ENCODE measurements at regions of chr6 and their contacts with region 1.

Region 1: GRCh38 chr6:21987501-21987957 is 309.3 kb downstream of the PRL start:
- DNase-seq: peak; percentile 78 to 90 (median 83)
- H3K4me3 ChIP-seq: peak overlapping the region; percentile 49 to 87 (median 81)
- H3K4me3 Mint-ChIP-seq: peak overlapping the region; percentile 71 to 74
- H3K27ac ChIP-seq: peak overlapping the region; percentile 83 to 85
- H3K27ac Mint-ChIP-seq: peak overlapping the region; percentile 83 to 95 (median 94)
- H3K4me1 ChIP-seq: peaks cover 23 to 24% of the 10 kb centered on the region in 2 donors
- H3K4me1 Mint-ChIP-seq: peaks cover 24% of the 10 kb centered on the region
- H3K27me3 ChIP-seq: no peaks in the 10 kb centered on the region
- H3K27me3 Mint-ChIP-seq: peaks cover 0 to 2% (median 0%) of the 10 kb centered on the region in 3 donors
- CTCF ChIP-seq: no peak

Region 2: DNA sequence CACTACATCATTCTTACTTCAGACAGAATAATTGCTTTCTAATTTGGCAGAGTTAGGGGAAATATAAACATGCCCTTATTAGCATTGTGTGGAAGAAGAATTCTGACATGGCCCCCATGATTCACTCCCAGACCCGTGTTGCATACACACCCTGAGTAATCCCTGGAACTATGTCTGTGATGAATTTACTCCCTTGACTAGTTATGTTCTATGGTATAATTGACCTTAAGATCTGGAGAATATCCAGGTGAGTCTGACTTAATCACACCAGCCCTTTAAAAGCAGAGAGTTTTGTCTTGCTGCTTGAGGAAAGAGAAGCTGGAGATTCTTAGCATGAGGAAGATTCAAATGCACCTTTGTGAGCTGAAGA is 131.1 kb before region 1 on chr6:
- intact Hi-C with region 1: loop called in 1 of 2 experiments (anchors 5 kb)
- DNase-seq: peak; percentile 75 to 88 (median 86)
- H3K4me3 ChIP-seq: peak overlapping the region; percentile 31 to 88 (median 72)
- H3K4me3 Mint-ChIP-seq: peak overlapping the region; percentile 68 to 89
- H3K27ac ChIP-seq: peak overlapping the region; percentile 98 to 100
- H3K27ac Mint-ChIP-seq: peak overlapping the region; percentile 99 to 100 (median 99)
- H3K4me1 ChIP-seq: peaks cover 34 to 45% of the 10 kb centered on the region in 2 donors
- H3K4me1 Mint-ChIP-seq: peaks cover 41% of the 10 kb centered on the region
- H3K27me3 ChIP-seq: no peaks in the 10 kb centered on the region
- H3K27me3 Mint-ChIP-seq: peaks cover 0 to 2% (median 0%) of the 10 kb centered on the region in 3 donors
- CTCF ChIP-seq: no peak

Region 3: GRCh38 chr6:22155551-22155950 is 168.0 kb after region 1 on chr6:
- intact Hi-C with region 1: no loop called
- DNase-seq: no peak
- H3K4me3 ChIP-seq: no peak overlapping the region
- H3K4me3 Mint-ChIP-seq: no peak overlapping the region
- H3K27ac ChIP-seq: no peak overlapping the region
- H3K27ac Mint-ChIP-seq: no peak overlapping the region
- H3K4me1 ChIP-seq: peaks cover 11 to 12% of the 10 kb centered on the region in 2 donors
- H3K4me1 Mint-ChIP-seq: peaks cover 12% of the 10 kb centered on the region
- H3K27me3 ChIP-seq: no peaks in the 10 kb centered on the region
- H3K27me3 Mint-ChIP-seq: peaks cover 0 to 3% (median 0%) of the 10 kb centered on the region in 3 donors
- CTCF ChIP-seq: no peak